GM12878 (cell line): ENCODE measurements at regions of chr13 and their contacts with region 1.

Region 1: DNA sequence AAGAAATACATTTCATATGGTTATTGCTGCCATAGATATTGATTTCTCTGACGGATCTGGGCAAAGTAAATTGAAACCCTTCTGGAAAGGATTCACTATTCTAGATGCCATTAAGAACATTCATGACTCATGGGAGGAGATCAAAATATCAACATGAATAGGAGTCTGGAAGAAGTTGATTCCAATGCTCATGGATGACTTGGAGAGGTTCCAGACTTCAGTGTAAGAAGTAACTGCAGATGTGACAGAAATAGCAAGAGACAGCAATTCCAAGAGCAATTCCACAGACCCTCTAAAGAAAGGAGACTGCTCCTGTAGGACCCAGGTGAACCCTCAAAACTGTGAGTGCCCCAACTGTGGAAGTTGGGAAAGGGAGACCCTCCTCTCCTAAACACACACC is 30.9 kb upstream of the KCTD12 start:
- DNase-seq: no peak
- ATAC-seq: no peak
- H3K4me3 ChIP-seq: no peak overlapping the region
- H3K27ac ChIP-seq: no peak overlapping the region
- H3K4me1 ChIP-seq: no peaks in the 10 kb centered on the region
- H3K27me3 ChIP-seq: no peaks in the 10 kb centered on the region; a peak in 1 of 4 replicates
- CTCF ChIP-seq: no peak
- EP300 ChIP-seq: no peak
- POLR2A ChIP-seq: no peak
- RAD21 ChIP-seq: no peak

Region 2: DNA sequence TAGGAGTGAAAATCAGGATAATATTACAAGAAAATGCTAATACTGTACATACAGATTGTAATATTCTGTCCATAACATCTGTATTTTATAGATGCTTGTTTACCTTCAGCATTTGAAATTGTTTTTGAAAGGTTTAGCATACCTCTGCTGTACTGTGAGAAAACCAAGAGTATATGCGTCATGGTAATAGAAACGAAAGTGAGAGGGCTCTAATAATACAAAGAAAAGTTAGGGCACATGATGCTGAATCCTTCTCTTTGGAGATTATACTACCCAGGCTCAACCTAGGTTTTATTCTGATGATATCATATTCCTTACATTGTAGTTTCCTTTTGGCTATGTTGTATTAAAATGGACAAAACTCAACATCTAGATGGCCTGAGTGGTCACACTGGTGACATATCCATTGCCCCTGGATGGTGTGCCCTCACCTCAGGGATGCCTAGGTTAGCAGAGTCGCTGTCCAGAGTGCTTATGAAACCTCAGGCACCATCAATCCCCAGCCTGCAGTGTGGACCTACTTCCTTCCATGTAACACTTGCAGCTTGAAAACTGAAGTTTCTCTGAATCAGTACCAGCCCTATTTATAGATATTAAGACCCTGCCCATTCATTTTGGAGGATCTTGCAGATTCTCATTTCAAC is 284.6 kb before region 1 on chr13:
- CTCF ChIA-PET with region 1: no interaction called
- POLR2A ChIA-PET with region 1: no interaction called
- RAD21 ChIA-PET with region 1: no interaction called
- SMC1A ChIA-PET with region 1: no interaction called
- in situ Hi-C with region 1: no loop called
- intact Hi-C with region 1: no loop called
- DNase-seq: no peak
- ATAC-seq: peak; percentile 69
- H3K4me3 ChIP-seq: no peak overlapping the region
- H3K27ac ChIP-seq: no peak overlapping the region
- H3K4me1 ChIP-seq: peaks cover 8% of the 10 kb centered on the region
- H3K27me3 ChIP-seq: no peaks in the 10 kb centered on the region
- CTCF ChIP-seq: no peak
- EP300 ChIP-seq: no peak
- POLR2A ChIP-seq: no peak
- RAD21 ChIP-seq: no peak

Region 3: DNA sequence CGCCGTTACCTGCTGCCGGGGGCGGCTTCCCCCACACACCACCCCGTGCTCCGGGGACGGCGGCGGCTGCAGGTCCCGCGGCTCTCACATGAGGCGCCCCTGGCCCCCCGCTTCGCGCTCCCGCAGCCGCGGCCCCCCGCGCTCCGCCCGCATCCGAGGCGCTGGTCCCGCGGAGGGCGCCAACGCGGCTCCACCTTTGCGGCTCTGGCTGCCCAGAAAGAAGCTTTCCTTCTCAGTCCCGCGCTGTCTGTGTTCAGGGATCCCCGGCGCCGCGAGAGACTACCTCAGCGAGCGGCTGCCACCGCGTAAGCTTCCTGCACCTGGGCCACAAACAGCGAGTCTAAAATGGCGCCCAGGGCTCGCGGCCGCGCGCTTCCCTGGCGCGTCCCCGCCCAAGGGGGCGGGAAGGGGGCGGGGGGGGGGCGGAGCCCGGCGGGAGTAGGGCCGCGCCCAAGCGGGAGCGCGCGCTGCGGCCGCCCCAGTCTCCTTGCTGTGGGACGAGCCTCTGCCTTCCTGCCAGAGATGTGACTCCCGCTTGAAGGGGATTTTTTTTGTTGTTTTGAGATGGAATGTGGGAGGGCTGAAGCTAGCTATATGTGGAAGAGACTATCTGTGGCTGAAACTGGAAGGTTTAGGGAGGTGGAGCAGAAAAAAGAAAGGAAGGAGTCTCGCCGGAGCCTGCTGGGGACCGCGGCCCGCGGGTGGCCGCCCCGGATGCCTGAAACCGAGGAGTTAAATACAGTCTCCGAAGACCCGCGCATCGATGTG is 109.9 kb after region 1 on chr13 and contains the start of gene FBXL3:
- CTCF ChIA-PET with region 1: no interaction called
- POLR2A ChIA-PET with region 1: interaction called, 11 read pairs
- RAD21 ChIA-PET with region 1: no interaction called
- SMC1A ChIA-PET with region 1: no interaction called
- in situ Hi-C with region 1: no loop called
- intact Hi-C with region 1: no loop called
- DNase-seq: peak; percentile 35
- ATAC-seq: peak; percentile 63
- H3K4me3 ChIP-seq: peak within 1 kb of the TSS; percentile 93
- H3K27ac ChIP-seq: peak within 1 kb of the TSS; percentile 79
- H3K4me1 ChIP-seq: no peaks in the 10 kb centered on the region
- H3K27me3 ChIP-seq: no peaks in the 10 kb centered on the region
- CTCF ChIP-seq: no peak
- EP300 ChIP-seq: no peak
- POLR2A ChIP-seq: peak; percentile 90
- RAD21 ChIP-seq: no peak
- polyA plus RNA-seq, gene FBXL3: 9.0 to 11.4 TPM